Astrocyte of the cerebellum (primary cell): ENCODE measurements at regions of chr11 and their contacts with region 1.

Region 1: GRCh38 chr11:33273656-33274055 is 16.5 kb downstream of the HIPK3 start:
- DNase-seq: no peak
- H3K4me3 ChIP-seq: no peak overlapping the region
- CTCF ChIP-seq: no peak

Region 2: GRCh38 chr11:33350287-33350686 is 76.6 kb after region 1 on chr11:
- in situ Hi-C with region 1: loop called (anchors 5 kb)
- DNase-seq: no peak
- H3K4me3 ChIP-seq: no peak overlapping the region
- CTCF ChIP-seq: no peak